ENCODE measurements at regions of chr1 and their contacts with region 1.

Region 1: DNA sequence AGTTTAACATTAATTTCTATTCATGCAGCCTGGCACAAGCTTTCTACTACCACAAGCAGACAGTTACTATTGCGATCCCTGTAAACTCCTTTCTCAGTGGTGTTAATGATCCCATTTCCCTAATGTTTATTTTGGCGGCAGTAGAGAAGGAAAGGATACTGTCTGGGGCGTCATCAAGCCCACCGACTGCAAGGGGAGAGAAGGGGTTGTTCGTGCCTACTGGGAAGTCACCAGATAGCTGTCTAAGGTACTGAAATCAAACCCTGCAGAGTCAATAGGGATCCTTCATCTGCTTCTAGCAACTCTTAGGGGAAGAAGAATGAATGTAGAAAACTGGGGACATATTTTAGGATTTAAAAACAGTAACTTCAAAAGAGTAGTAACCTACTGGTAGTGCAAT is 95.2 kb upstream of the ADAR start:
- DNase-seq: no peak
- ATAC-seq: no peak
- H3K4me3 ChIP-seq: no peak overlapping the region
- H3K27ac ChIP-seq: no peak overlapping the region
- H3K4me1 ChIP-seq: no peaks in the 10 kb centered on the region
- H3K27me3 ChIP-seq: peaks cover 14% of the 10 kb centered on the region
- CTCF ChIP-seq: no peak

Region 2: DNA sequence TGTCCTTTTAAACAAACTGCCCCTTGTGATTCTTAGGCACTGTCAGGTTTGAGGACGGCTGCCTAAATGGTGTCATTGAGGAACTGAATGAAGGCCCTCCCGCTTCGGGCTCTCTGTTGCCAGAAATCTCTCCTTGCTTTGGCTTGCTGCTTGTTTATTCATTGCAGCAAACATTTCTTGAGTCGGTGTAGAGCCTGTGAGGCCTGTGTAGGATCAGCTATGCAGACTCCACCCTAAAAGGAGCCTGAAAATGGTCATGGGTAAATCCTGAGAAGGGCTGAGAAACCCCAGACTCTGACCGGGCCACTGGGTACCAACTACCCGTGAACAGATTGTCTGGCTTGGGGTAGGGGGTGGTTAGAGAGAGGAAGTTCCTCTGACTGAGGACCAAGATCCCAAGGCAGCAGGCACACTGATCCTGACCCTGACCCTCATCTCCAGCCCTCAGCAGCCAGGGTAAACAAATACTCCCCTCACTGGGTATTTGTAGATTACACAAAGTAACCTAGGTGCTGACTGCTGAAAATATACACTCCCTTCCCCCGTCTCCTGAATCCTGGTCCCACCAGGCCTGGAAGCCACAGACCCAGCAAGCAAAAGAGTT is 294.9 kb before region 1 on chr1:
- CTCF ChIA-PET with region 1: no interaction called
- POLR2A ChIA-PET with region 1: no interaction called
- in situ Hi-C with region 1: no loop called
- intact Hi-C with region 1: no loop called
- DNase-seq: no peak
- ATAC-seq: no peak
- H3K4me3 ChIP-seq: peak overlapping the region in 1 of 2 experiments; percentile 73; a peak in 2 of 4 replicates
- H3K27ac ChIP-seq: peak overlapping the region; percentile 88
- H3K4me1 ChIP-seq: peaks cover 46% of the 10 kb centered on the region
- H3K27me3 ChIP-seq: no peaks in the 10 kb centered on the region
- CTCF ChIP-seq: no peak

Region 3: DNA sequence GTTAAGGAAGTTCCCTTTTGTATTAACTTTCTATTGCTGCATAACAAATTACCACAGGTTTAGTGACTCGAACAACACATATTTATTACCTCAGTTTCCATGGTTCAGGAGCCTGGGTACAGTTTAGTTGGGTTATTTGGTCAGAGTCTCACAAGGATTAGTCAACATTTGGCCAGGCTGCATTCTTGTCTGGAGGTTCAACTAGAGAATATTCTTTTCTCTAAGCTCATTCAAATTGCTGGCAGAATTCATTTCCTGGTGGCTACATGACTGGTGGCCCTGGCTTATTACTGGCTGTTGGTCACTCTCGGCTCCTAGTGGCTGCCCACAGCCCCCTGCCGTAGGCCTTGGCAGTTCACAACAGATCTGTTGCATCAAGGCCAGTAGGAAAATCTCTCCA is 14.1 kb before region 1 on chr1:
- CTCF ChIA-PET with region 1: no interaction called
- POLR2A ChIA-PET with region 1: no interaction called
- in situ Hi-C with region 1: no loop called
- intact Hi-C with region 1: no loop called
- DNase-seq: no peak
- ATAC-seq: no peak
- H3K4me3 ChIP-seq: no peak overlapping the region
- H3K27ac ChIP-seq: no peak overlapping the region
- H3K4me1 ChIP-seq: no peaks in the 10 kb centered on the region; the same call in 1 of the 2 replicates
- H3K27me3 ChIP-seq: peaks cover 10% of the 10 kb centered on the region
- CTCF ChIP-seq: no peak

Region 4: GRCh38 chr1:155479205-155479604 is 776.0 kb after region 1 on chr1:
- CTCF ChIA-PET with region 1: no interaction called
- POLR2A ChIA-PET with region 1: interaction called, 12 read pairs
- in situ Hi-C with region 1: no loop called
- intact Hi-C with region 1: no loop called
- DNase-seq: no peak
- ATAC-seq: no peak
- H3K4me3 ChIP-seq: no peak overlapping the region
- H3K27ac ChIP-seq: no peak overlapping the region
- H3K4me1 ChIP-seq: no peaks in the 10 kb centered on the region
- H3K27me3 ChIP-seq: no peaks in the 10 kb centered on the region
- CTCF ChIP-seq: no peak